HepG2 (cell line): ENCODE measurements at regions of chr15 and their contacts with region 1.

Region 1: GRCh38 chr15:39667382-39668127 is 86.7 kb downstream of the THBS1 start:
- DNase-seq: no peak
- ATAC-seq: no peak
- H3K4me3 ChIP-seq: no peak overlapping the region
- H3K27ac ChIP-seq: no peak overlapping the region
- H3K4me1 ChIP-seq: no peaks in the 10 kb centered on the region
- H3K27me3 ChIP-seq: no peaks in the 10 kb centered on the region; a peak in 1 of 5 replicates
- CTCF ChIP-seq: no peak
- EP300 ChIP-seq: no peak
- POLR2A ChIP-seq: no peak
- RAD21 ChIP-seq: no peak

Region 2: GRCh38 chr15:39605146-39605545 is 62.4 kb before region 1 on chr15:
- CTCF ChIA-PET with region 1: no interaction called
- POLR2A ChIA-PET with region 1: no interaction called
- in situ Hi-C with region 1: no loop called
- intact Hi-C with region 1: no loop called
- DNase-seq: no peak
- ATAC-seq: no peak
- H3K4me3 ChIP-seq: no peak overlapping the region
- H3K27ac ChIP-seq: no peak overlapping the region
- H3K4me1 ChIP-seq: no peaks in the 10 kb centered on the region
- H3K27me3 ChIP-seq: peaks cover 1 to 5% of the 10 kb centered on the region in 2 experiments; a peak in 2 of 5 replicates
- CTCF ChIP-seq: no peak
- EP300 ChIP-seq: no peak
- POLR2A ChIP-seq: no peak
- RAD21 ChIP-seq: no peak

Region 3: GRCh38 chr15:39710681-39711080 is 43.1 kb after region 1 on chr15:
- CTCF ChIA-PET with region 1: no interaction called
- POLR2A ChIA-PET with region 1: no interaction called
- in situ Hi-C with region 1: no loop called
- intact Hi-C with region 1: loop called (anchors 1 kb)
- DNase-seq: no peak
- ATAC-seq: no peak
- H3K4me3 ChIP-seq: no peak overlapping the region
- H3K27ac ChIP-seq: no peak overlapping the region
- H3K4me1 ChIP-seq: no peaks in the 10 kb centered on the region
- H3K27me3 ChIP-seq: no peaks in the 10 kb centered on the region
- CTCF ChIP-seq: no peak
- EP300 ChIP-seq: no peak
- POLR2A ChIP-seq: no peak
- RAD21 ChIP-seq: no peak